Ovary (tissue), 10 donors: ENCODE measurements at regions of chr10 and their contacts with region 1.

Region 1: DNA sequence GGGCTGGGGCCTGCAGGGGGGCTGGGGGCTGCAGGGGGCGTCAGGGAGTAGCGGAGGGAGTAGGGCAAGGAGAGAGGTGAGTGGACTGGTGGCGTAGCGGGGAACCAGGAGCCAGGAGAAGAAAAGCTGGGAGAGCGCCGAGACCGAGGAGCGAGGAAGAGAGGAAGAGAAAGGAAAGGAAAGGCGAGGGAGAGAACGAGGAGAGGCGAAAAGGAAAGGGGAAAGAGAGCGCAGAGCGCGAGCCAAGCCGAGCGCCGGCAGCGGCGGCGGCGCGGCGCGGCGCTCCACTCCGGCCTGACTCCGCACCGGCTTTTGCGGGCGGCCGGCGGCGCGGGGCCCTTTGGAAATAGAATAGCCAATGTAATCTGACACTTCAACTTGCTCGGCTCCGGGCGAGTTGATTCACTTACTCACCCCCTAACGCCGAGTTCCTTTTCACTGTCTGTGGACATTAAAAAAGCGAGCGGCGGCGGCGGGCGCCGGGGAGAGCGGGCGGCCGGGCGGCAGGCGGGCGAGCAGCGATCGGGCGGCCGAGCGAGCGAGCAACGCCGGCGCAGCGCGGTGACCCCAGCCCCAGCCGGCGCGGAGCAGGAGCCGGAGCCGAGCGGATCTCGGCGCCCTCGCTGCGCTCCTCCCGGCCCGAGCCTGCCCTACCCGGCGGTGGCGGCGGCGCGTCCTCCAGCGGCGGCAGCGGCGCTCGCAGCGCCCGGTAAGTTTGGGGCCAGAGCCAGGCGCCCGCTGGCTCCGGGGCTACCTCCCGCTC is at the start of gene ZMIZ1:
- DNase-seq: peak; percentile 87 to 92 (median 91)
- H3K4me3 ChIP-seq: peak within 1 kb of the TSS; percentile 56
- H3K27ac ChIP-seq: peak within 1 kb of the TSS; percentile 86 to 89
- H3K4me1 ChIP-seq: peaks cover 20% of the 10 kb centered on the region
- H3K27me3 ChIP-seq: no peaks in the 10 kb centered on the region
- CTCF ChIP-seq: no peak
- EP300 ChIP-seq: no peak
- POLR2A ChIP-seq: peak; percentile 83
- total RNA-seq, gene ZMIZ1: 30.3 to 117 (median 86.3) TPM

Region 2: DNA sequence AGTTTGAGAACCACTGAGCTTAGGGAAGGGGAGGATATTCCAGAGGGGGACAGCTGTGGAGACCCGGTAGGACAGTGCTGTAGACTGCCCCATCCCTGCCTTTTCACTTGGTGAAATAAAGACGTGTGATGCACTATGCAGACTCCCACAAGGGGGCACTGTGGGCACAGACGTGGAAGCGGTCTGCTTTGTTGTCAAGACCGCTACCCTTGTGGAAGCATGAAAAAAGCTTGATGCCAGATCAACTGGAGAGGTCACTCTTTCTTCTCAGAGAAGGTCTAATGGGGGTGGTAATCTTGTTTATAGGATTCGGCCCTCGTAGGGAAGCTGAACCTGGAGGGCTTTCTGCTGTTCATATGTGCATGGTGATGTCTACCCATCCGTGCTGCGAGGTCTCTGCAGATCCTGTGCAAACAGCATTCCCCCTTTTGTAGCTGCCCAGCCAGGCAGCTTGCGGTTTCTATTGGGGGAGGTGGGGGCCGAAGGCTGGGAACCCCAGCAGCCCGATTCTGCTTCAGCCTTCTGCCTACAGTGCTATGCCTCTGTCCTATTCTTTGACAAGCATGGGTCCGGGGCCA is 1021.3 kb before region 1 on chr10:
- intact Hi-C with region 1: loop called in 1 of 4 experiments (anchors 10 kb)
- DNase-seq: peak; percentile 83 to 92 (median 91)
- H3K4me3 ChIP-seq: no peak overlapping the region
- H3K27ac ChIP-seq: no peak overlapping the region
- H3K4me1 ChIP-seq: no peaks in the 10 kb centered on the region
- H3K27me3 ChIP-seq: no peaks in the 10 kb centered on the region
- CTCF ChIP-seq: peak; percentile 77 to 83 (median 78)
- EP300 ChIP-seq: no peak
- POLR2A ChIP-seq: no peak

Region 3: GRCh38 chr10:78302989-78303854 is 765.5 kb before region 1 on chr10:
- intact Hi-C with region 1: loop called in 1 of 4 experiments (anchors 5 kb)
- DNase-seq: peak; percentile 92 to 99 (median 96)
- H3K4me3 ChIP-seq: peak overlapping the region; percentile 48
- H3K27ac ChIP-seq: peak overlapping the region; percentile 18 to 68
- H3K4me1 ChIP-seq: peaks cover 7% of the 10 kb centered on the region
- H3K27me3 ChIP-seq: no peaks in the 10 kb centered on the region
- CTCF ChIP-seq: peak; percentile 50 to 91 (median 89)
- EP300 ChIP-seq: no peak
- POLR2A ChIP-seq: no peak

Region 4: DNA sequence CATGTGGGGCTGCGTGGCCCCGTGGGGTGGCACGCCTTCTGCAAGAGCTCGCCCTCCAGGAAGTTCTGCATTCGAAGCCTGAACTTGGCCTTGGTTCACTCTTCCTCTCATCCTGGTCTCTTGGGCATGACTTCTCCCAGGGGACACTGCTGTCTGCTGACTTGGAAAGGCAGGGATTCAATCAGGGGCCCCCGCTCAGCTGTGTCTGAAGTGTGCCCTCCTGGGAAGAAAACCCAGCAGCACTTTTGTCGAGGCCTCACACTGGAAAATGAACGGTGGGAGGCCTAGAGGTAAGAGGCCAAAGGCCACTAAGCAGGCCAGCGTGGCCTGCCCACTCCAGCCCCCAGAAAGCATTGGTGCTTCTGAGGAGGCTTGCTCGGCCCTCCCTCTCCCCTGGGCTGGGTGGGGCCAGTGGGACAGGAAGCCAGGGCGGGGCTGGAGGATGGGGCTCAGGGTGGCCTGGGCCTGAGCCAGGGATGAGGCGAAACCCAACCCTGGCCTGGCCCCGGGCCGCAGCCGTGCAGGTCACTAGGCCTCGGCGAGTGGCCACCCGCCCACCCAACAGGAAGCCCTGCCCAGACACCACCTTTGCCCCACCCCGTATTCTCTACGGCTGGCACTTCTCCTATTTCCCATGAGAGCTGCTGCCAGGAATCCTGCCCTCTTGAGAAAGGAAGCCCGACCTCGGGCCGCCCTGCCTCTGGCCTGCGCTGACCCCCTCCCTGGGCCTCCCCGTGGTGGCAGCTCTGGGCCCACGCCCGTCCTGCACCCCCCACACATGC is 81.1 kb after region 1 on chr10:
- intact Hi-C with region 1: loop called in 2 of 4 experiments (anchors 5 kb)
- DNase-seq: peak; percentile 63 to 80 (median 74)
- H3K4me3 ChIP-seq: no peak overlapping the region
- H3K27ac ChIP-seq: peak overlapping the region; percentile 63 to 71
- H3K4me1 ChIP-seq: peaks cover 68% of the 10 kb centered on the region
- H3K27me3 ChIP-seq: no peaks in the 10 kb centered on the region
- CTCF ChIP-seq: no peak
- EP300 ChIP-seq: no peak
- POLR2A ChIP-seq: no peak

Region 5: GRCh38 chr10:79195091-79195923 is 126.6 kb after region 1 on chr10:
- intact Hi-C with region 1: loop called in 2 of 4 experiments (anchors 2 to 5 kb)
- DNase-seq: peak; percentile 80 to 90 (median 88)
- H3K4me3 ChIP-seq: no peak overlapping the region
- H3K27ac ChIP-seq: peak overlapping the region in 1 of 2 donors; percentile 53
- H3K4me1 ChIP-seq: peaks cover 19% of the 10 kb centered on the region
- H3K27me3 ChIP-seq: no peaks in the 10 kb centered on the region
- CTCF ChIP-seq: peak; percentile 95 to 97 (median 97)
- EP300 ChIP-seq: no peak
- POLR2A ChIP-seq: no peak

Region 6: DNA sequence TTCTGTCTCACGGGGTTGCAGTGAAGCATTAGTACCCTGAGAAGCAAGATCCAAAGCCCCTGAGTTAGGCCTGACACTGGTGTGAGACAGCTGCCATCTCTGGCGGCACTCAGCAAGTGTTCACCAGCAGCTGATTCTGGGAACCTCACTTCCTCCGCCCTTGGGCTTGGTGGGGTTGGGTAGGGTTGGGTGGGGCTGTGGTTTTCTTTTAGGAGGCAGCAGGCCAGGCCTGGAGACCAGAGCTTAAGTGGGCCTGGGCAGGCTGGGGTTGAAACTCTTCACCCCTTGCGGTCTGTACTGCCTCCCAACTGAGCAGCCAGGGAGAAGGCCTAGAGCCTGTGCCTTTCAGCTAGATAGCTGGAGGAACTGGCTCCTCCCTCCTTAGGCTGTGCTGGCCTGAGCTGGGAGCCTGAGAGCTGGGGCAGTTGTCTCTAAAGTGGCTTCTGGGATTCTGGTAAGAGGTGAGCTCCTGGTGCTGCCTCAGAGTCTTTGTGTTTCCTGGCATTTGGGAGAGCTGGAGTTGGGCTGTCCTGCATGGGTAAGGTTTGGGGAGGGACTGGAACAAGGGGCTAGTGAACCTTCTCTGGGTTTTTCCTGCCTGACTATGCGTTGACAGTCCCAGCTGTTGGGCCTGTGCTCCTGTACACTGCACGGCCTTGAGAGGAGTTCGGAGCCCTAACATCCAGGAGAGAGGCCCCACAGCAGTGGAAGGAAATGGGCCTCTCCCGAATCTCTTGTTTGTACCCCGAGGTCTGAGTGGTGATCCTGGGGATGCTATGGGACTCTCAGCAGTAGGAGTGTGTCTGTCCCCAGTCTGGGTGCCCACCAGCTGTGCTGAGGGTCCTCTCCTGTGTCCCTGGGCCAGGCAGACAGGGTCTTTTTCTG is 1390.5 kb after region 1 on chr10:
- intact Hi-C with region 1: no loop called
- DNase-seq: peak in 1 of 5 donors; percentile 47
- H3K4me3 ChIP-seq: no peak overlapping the region
- H3K27ac ChIP-seq: peak overlapping the region; percentile 31 to 48
- H3K4me1 ChIP-seq: peaks cover 42% of the 10 kb centered on the region
- H3K27me3 ChIP-seq: no peaks in the 10 kb centered on the region
- CTCF ChIP-seq: no peak
- EP300 ChIP-seq: no peak
- POLR2A ChIP-seq: no peak